ENCODE measurements at regions of chr9 and their contacts with region 1.

Region 1: GRCh38 chr9:86434039-86434726 is 80.0 kb upstream of the TUT7 start:
- DNase-seq: no peak
- ATAC-seq: no peak
- H3K4me3 Mint-ChIP-seq: no peak overlapping the region
- H3K27ac Mint-ChIP-seq: no peak overlapping the region
- H3K4me1 Mint-ChIP-seq: no peaks in the 10 kb centered on the region
- H3K27me3 Mint-ChIP-seq: peaks cover 13% of the 10 kb centered on the region
- CTCF ChIP-seq: peak; percentile 78

Region 2: DNA sequence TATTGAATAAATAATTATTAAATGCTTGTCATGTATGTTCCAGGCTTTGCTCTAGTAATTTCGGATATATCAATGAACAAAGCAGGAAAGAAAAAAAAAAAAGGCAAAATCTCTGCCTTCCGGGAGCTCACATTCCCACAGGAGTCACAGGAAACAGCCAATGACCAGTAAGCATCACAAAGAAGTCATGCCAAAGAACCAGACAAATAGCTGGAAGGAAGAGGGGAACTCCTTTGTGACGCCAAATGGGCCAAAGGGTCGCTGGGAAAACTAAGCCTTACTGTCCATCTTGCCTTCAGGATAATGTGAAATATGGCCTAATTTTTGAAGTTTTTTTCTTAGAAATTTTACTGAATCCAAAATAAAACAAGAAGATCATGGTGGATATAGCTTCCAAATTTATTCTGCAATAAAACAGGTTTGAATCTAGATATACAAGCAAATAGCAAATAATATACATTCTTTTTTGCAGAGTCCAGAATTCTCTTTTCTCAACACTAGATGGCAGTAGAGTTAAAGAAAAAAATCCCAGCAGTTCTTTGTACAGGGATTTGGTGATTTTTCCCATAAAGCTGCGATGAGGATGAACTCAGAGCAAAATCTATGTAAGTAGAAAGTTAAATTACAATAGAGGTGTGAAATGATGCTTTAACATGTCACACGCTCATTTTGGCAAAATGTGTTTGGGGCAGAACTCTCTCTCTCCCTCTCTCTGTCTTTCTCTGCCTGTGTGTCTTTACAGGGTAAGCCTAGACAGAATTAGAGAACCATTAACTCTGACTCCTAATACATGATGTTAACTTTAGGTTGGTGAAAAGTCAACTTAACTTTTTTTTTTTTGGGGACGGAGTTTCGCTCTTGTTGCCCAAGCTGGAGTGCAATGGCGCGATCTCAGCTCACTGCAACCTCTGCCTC is 20.0 kb before region 1 on chr9:
- CTCF ChIA-PET with region 1: interaction called, 17 read pairs
- POLR2A ChIA-PET with region 1: no interaction called
- intact Hi-C with region 1: no loop called
- DNase-seq: no peak
- ATAC-seq: no peak
- H3K4me3 Mint-ChIP-seq: no peak overlapping the region
- H3K27ac Mint-ChIP-seq: no peak overlapping the region
- H3K4me1 Mint-ChIP-seq: no peaks in the 10 kb centered on the region
- H3K27me3 Mint-ChIP-seq: peaks cover 7% of the 10 kb centered on the region
- CTCF ChIP-seq: peak; percentile 86

Region 3: DNA sequence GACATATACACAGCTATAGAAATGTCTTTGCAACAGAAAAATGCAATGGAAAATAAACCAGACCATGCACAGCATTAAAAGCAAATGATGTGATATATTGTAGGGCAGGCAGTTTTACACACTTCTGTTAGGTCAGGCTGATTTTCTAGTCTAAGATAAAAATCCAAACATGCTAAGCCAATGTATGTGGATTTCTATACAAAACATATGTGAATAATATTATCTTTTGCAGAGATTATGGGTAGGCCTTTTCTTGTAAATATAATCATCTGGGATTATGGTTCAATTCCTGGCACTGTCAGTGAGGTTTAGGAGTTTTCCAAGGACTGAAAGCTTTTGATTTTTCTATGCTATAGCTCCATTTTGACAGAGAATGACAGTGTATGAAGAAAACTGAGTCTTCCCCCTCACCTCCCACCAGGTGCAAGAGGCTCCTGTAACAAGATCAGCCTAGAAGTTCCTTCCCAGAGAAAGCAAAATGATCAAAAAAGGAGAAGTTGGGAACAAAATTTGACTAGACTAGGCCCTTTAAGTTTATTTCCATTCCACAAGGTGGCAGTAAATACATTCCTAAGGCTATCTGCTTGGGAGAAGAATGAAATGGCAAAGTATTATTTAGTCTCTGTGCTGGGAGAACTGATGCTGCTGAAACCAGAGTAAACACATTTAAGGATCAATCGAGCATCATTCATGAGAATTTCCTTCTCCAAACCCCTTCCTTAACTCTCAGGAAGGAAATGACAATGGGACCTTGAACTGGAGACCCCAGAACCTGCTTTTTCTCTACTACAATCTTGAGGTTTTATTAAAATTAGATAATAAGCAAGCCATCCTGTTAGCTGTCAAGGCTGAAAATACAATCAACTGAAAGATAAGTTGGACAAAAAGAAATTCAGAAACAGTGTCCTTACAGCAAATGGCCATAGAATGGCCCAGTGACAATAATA is 53.0 kb after region 1 on chr9:
- CTCF ChIA-PET with region 1: interaction called, 14 read pairs
- POLR2A ChIA-PET with region 1: no interaction called
- intact Hi-C with region 1: no loop called
- DNase-seq: no peak
- ATAC-seq: no peak
- H3K4me3 Mint-ChIP-seq: no peak overlapping the region
- H3K27ac Mint-ChIP-seq: no peak overlapping the region
- H3K4me1 Mint-ChIP-seq: peaks cover 7% of the 10 kb centered on the region
- H3K27me3 Mint-ChIP-seq: no peaks in the 10 kb centered on the region
- CTCF ChIP-seq: peak; percentile 37

Region 4: GRCh38 chr9:87324613-87325194 is 890.5 kb after region 1 on chr9:
- CTCF ChIA-PET with region 1: interaction called, 23 read pairs
- POLR2A ChIA-PET with region 1: no interaction called
- intact Hi-C with region 1: loop called (anchors 10 kb)
- DNase-seq: no peak
- ATAC-seq: no peak
- H3K4me3 Mint-ChIP-seq: no peak overlapping the region
- H3K27ac Mint-ChIP-seq: no peak overlapping the region
- H3K4me1 Mint-ChIP-seq: no peaks in the 10 kb centered on the region
- H3K27me3 Mint-ChIP-seq: peaks cover 1% of the 10 kb centered on the region
- CTCF ChIP-seq: peak; percentile 78

Measured in activated CD8-positive, alpha-beta T cell treated with anti-CD3 and anti-CD28 coated beads for 36 hours (primary cell).